CD14-positive monocyte (primary cell): ENCODE measurements at regions of chr18 and their contacts with region 1.

Region 1: GRCh38 chr18:79378542-79379250 is 17.0 kb upstream of the NFATC1 start:
- DNase-seq: peak; percentile 62 to 81 (median 63)
- H3K4me3 ChIP-seq: no peak overlapping the region
- H3K4me3 Mint-ChIP-seq: no peak overlapping the region
- H3K27ac ChIP-seq: no peak overlapping the region
- H3K27ac Mint-ChIP-seq: peak overlapping the region in 1 of 7 donors; percentile 74
- H3K4me1 ChIP-seq: peaks cover 4% of the 10 kb centered on the region in 2 donors
- H3K4me1 Mint-ChIP-seq: peaks cover 8% of the 10 kb centered on the region
- H3K27me3 ChIP-seq: no peaks in the 10 kb centered on the region
- H3K27me3 Mint-ChIP-seq: peaks cover 0 to 2% (median under 1%) of the 10 kb centered on the region in 3 donors
- CTCF ChIP-seq: peak; percentile 95

Region 2: DNA sequence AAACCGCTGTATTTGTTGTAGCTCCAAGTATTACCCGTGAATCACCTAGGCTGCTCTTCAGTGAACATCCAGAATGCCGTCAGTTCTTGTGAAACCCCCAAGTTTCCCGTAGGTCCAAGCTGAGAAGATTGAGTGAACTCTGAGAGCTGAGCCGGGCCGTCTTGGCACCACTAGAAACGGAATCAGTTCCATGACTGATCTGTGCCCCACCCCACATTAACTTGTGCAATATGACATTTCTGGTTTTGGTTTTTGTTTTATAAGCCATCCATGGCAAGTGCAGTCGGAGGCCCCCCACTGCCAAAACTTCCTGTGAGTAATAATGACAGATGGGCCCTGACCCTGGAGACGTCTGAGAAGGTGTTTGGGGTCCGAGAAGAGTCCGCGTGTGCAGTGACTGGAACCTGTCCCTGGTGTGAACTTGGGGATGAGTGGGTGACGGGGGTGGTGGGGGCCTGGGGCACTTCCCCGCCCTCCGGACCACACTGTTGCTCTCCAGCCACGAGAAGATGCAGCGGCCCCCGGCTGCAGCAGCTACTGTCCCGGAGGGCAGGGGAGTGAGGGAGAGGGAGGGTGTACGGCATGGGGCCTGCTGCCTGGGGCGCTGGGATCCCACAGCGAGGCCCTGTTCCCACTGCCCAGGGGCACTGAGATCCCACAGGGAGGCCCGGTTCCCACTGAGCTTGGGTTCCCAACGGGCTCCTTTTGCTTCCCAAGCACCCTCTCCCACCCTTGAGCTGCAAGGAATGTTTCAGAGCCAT is 43.5 kb after region 1 on chr18:
- intact Hi-C with region 1: loop called in 1 of 2 experiments (anchors 5 kb)
- DNase-seq: peak; percentile 32 to 71 (median 66)
- H3K4me3 ChIP-seq: peak overlapping the region in 1 of 3 experiments; percentile 29
- H3K4me3 Mint-ChIP-seq: peak overlapping the region; percentile 47 to 59
- H3K27ac ChIP-seq: peak overlapping the region in 1 of 2 donors; percentile 69
- H3K27ac Mint-ChIP-seq: peak overlapping the region; percentile 46 to 83 (median 68)
- H3K4me1 ChIP-seq: peaks cover 9 to 17% of the 10 kb centered on the region in 2 donors
- H3K4me1 Mint-ChIP-seq: peaks cover 18% of the 10 kb centered on the region
- H3K27me3 ChIP-seq: no peaks in the 10 kb centered on the region
- H3K27me3 Mint-ChIP-seq: peaks cover 2 to 4% (median 2%) of the 10 kb centered on the region in 3 donors
- CTCF ChIP-seq: no peak

Region 3: DNA sequence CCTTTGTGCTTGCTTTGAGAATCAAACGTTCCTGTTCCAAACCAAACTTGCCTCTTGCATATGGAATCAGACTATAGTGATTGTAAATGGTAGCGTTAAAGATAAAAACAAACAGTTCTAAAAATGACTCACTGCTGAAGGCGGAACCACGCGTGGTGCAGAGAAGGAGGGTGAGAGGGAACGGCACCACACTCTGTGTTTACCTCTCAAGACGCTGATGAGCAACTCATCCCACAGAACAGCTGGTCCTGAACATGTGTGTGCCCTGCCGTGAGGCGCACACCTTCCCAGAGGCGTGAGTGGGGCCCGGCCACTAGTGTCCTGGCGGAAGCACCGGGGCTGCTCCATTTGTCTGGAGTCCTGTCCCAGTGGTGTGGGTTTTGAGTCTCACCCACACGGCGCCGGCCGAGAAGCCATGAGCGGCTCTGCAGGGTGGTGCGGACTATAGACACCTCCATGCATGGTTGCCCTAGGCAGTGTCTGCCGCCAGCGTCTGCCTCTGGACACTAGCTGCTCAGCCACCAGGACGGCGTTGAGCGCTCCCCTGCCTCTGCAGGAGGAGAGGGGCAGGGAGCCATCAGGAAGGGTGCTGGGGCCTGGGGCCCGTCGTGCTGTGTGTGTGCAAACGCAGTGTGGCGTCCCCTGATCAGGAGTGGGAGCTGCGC is 69.1 kb after region 1 on chr18:
- intact Hi-C with region 1: no loop called
- DNase-seq: no peak
- H3K4me3 ChIP-seq: no peak overlapping the region
- H3K4me3 Mint-ChIP-seq: no peak overlapping the region
- H3K27ac ChIP-seq: no peak overlapping the region
- H3K27ac Mint-ChIP-seq: no peak overlapping the region
- H3K4me1 ChIP-seq: no peaks in the 10 kb centered on the region
- H3K4me1 Mint-ChIP-seq: no peaks in the 10 kb centered on the region
- H3K27me3 ChIP-seq: no peaks in the 10 kb centered on the region
- H3K27me3 Mint-ChIP-seq: peaks cover 0 to 3% (median 0%) of the 10 kb centered on the region in 3 donors
- CTCF ChIP-seq: no peak

Region 4: GRCh38 chr18:79496978-79497637 is 118.4 kb after region 1 on chr18:
- intact Hi-C with region 1: no loop called
- DNase-seq: no peak
- H3K4me3 ChIP-seq: no peak overlapping the region
- H3K4me3 Mint-ChIP-seq: no peak overlapping the region
- H3K27ac ChIP-seq: no peak overlapping the region
- H3K27ac Mint-ChIP-seq: no peak overlapping the region
- H3K4me1 ChIP-seq: no peaks in the 10 kb centered on the region
- H3K4me1 Mint-ChIP-seq: no peaks in the 10 kb centered on the region
- H3K27me3 ChIP-seq: no peaks in the 10 kb centered on the region
- H3K27me3 Mint-ChIP-seq: peaks cover 0 to 1% (median 0%) of the 10 kb centered on the region in 3 donors
- CTCF ChIP-seq: no peak

Region 5: DNA sequence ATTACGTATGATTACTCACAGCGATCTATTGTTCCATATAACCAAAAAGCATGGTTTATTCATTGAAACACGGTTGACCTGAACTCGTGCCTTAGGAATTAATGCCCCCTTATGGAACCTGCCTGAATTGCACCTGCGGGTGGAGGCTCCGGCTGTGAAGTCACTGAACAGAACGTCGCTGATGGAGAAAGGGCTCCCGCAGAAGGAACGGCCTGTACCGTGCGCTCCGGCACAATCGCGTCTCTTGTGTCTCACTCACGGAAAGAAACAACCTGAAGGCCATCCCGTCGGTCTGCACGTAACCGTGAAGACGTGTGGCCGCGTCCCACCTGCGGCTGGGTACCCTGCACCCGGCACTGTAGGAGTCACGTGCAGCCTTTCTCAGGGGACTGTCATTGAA is 150.2 kb after region 1 on chr18:
- intact Hi-C with region 1: loop called (anchors 2 kb)
- DNase-seq: peak in 2 of 3 donors; percentile 25 to 36
- H3K4me3 ChIP-seq: no peak overlapping the region
- H3K4me3 Mint-ChIP-seq: no peak overlapping the region
- H3K27ac ChIP-seq: no peak overlapping the region
- H3K27ac Mint-ChIP-seq: no peak overlapping the region
- H3K4me1 ChIP-seq: peaks cover 6 to 7% of the 10 kb centered on the region in 2 donors
- H3K4me1 Mint-ChIP-seq: peaks cover 6% of the 10 kb centered on the region
- H3K27me3 ChIP-seq: peaks cover 0 to 30% of the 10 kb centered on the region in 2 donors
- H3K27me3 Mint-ChIP-seq: peaks cover 5 to 15% (median 9%) of the 10 kb centered on the region in 3 donors
- CTCF ChIP-seq: peak; percentile 85

Region 6: DNA sequence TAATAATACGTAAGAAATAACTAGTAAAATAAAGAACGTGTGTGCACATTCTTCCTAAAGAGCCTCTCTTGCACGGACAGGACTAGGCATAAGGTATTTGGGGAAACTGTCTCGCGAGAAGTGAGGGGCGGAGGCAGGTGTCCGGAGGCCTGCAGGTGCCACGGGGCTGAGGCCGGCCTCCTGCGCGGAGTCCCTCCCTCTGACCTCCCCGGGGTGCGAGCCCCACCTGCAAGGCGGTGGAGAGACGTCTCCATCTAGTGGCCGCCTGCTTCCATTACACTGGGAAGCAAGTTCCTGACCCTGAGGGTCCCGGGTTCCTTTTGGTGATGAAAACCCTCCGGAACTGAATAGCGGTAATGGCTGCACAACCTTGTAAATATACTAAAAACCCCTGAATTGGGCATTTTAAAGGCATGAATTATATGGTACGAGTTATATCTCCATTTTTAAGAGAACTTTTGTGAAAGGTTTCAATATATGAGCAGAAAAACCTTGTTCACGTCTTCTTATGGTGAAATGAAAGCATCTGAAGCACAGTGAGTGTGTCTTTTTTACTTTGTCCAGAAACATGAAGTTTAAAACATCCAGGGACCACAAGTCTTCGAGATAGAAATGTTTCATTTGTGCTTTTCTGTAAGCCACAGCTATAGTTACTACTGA is 265.4 kb after region 1 on chr18:
- intact Hi-C with region 1: loop called (anchors 1 to 2 kb)
- DNase-seq: peak; percentile 33 to 67 (median 39)
- H3K4me3 ChIP-seq: peak overlapping the region in 1 of 3 experiments; percentile 47
- H3K4me3 Mint-ChIP-seq: peak overlapping the region in 1 of 2 donors; percentile 35
- H3K27ac ChIP-seq: no peak overlapping the region
- H3K27ac Mint-ChIP-seq: peak overlapping the region in 1 of 7 donors; percentile 82
- H3K4me1 ChIP-seq: peaks cover 31 to 42% of the 10 kb centered on the region in 2 donors
- H3K4me1 Mint-ChIP-seq: peaks cover 42% of the 10 kb centered on the region
- H3K27me3 ChIP-seq: peaks cover 0 to under 1% of the 10 kb centered on the region in 2 donors
- H3K27me3 Mint-ChIP-seq: peaks cover 2 to 12% (median 8%) of the 10 kb centered on the region in 3 donors
- CTCF ChIP-seq: peak; percentile 99